ENCODE measurements at regions of chr6 and their contacts with region 1.

Region 1: DNA sequence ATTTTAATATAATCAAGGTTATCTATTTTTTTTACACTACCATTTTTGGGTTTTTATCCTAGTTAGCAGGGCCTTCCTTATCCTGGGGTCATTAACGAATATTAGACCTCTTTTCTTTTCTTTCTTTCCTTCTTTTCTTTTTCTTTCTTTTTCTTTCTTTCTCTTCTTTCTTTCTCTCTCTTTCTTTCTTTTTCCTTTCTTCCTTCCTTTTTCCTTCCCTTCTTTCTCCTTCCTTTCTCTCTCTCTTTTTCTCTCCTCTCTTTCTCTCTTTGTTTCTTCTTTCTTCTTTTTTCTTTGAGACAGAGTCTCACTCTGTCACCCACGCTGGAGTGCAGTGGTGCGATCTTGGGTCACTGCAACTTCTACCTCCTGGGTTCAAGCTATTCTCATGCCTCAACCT is 120.4 kb upstream of the PDE7B start:
- DNase-seq: no peak
- ATAC-seq: no peak
- H3K4me3 Mint-ChIP-seq: no peak overlapping the region
- H3K27ac Mint-ChIP-seq: no peak overlapping the region
- H3K4me1 Mint-ChIP-seq: no peaks in the 10 kb centered on the region
- H3K27me3 Mint-ChIP-seq: peaks cover 8% of the 10 kb centered on the region
- CTCF ChIP-seq: no peak

Region 2: DNA sequence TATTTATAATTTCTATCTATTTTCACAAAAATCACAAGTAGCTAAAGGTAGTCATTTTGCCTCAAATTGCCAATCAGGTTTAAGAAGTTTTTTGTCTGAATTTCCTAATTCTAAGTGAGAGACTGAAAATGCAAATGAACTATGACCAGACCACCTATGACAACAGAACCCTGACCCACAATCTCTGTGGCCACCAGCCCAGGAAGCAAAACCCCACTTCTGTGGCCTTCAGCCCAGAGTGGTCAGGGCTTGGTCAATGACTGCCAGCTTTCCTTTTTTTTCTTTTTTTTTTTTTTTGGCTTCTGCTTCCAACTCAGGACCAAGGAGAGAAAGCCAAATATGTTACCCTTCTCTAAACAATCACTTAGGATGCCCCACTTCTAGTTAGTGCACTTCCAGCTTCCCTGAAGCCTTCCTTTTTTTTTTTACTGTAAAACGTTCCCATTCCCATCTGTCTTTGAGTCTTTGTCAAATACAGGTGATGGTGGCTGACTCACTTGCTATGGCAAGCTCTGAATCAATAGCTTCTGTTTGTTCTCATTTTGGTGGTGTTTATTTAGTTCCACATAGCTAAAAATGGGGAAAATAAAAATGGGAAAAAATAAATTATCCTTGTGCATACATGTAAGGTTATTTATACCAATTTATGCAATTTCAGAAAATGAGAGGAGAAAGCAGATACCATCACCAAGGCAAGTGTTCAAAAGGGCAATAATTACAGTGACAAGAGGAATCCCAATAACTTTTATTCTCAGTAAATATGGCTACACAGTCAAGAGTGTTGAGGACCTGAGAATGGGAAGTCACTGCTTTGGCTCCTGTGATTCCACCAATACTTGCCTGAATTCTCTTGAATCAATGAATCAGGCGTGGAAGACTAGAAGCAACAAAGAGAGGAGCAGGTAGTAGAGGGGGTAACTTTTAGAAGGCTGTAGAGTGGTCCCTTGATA is 49.9 kb before region 1 on chr6:
- CTCF ChIA-PET with region 1: no interaction called
- POLR2A ChIA-PET with region 1: no interaction called
- intact Hi-C with region 1: no loop called
- DNase-seq: no peak
- ATAC-seq: no peak
- H3K4me3 Mint-ChIP-seq: no peak overlapping the region
- H3K27ac Mint-ChIP-seq: no peak overlapping the region
- H3K4me1 Mint-ChIP-seq: no peaks in the 10 kb centered on the region
- H3K27me3 Mint-ChIP-seq: peaks cover 6% of the 10 kb centered on the region
- CTCF ChIP-seq: no peak

Region 3: DNA sequence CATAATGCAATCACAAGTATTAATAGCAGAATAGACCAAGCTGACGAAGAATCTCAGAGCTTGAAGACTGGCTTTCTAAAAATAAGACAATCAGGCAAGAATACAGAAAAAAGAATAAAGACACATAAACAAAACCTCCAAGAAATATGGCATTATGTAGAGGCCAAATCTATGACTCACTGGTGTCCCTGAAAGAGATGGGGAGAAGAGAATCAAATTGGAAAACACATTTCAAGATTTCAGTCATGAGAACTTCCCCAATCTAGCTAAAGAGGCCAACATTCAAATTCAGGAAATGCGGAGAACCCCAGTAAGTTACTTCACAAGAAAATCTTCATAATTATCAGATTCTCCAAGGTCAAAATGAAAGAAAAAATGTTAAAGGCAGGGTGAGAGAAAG is 51.4 kb after region 1 on chr6:
- CTCF ChIA-PET with region 1: no interaction called
- POLR2A ChIA-PET with region 1: no interaction called
- intact Hi-C with region 1: loop called (anchors 5 kb)
- DNase-seq: no peak
- ATAC-seq: no peak
- H3K4me3 Mint-ChIP-seq: no peak overlapping the region
- H3K27ac Mint-ChIP-seq: no peak overlapping the region
- H3K4me1 Mint-ChIP-seq: no peaks in the 10 kb centered on the region
- H3K27me3 Mint-ChIP-seq: peaks cover 11% of the 10 kb centered on the region
- CTCF ChIP-seq: no peak

Region 4: GRCh38 chr6:136173519-136174507 is 442.7 kb after region 1 on chr6:
- CTCF ChIA-PET with region 1: no interaction called
- POLR2A ChIA-PET with region 1: no interaction called
- intact Hi-C with region 1: no loop called
- DNase-seq: no peak
- ATAC-seq: no peak
- H3K4me3 Mint-ChIP-seq: no peak overlapping the region
- H3K27ac Mint-ChIP-seq: no peak overlapping the region
- H3K4me1 Mint-ChIP-seq: no peaks in the 10 kb centered on the region
- H3K27me3 Mint-ChIP-seq: no peaks in the 10 kb centered on the region
- CTCF ChIP-seq: no peak

Measured in activated B cell treated with CpG ODN at 0.5 μM for 24 hours (primary cell).